ENCODE measurements at regions of chr12 and their contacts with region 1.

Region 1: DNA sequence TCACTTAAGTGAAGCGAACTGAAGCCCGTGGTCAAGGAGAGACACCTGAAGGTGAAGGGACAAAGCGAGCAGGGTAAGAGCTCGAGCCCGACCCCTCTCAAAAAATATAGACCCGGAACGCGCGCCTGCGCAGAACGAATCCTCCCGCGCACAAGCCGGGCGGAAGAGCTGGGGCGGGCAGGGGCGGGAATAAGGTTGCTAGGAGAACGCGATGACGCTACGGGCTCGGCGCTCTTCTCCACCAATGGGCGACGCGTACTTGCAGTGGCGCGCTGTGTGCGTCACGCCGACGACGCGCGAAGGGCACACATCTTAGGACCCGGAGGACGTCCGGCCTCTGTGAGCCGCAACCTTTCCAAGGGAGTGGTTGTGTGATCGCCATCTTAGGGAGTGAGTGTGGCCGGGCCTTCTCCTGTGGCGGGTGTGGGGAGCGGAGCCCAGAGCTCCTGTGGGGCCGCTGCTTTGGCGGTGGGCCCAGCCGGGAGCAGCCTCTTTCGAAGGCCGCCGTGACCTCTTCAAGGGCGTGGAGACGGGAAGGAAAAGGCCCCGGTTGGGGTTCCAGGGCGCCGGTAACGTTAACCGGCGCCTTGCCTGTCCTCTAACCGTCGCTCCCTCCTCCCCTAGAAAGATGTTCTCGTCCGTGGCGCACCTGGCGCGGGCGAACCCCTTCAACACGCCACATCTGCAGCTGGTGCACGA is at the start of gene SLC25A3:
- DNase-seq: peak; percentile 98 to 99 (median 99)
- ATAC-seq: peak; percentile 99 to 100
- H3K4me3 ChIP-seq: peak within 1 kb of the TSS; percentile 82
- H3K27ac ChIP-seq: peak within 1 kb of the TSS; percentile 98
- H3K4me1 ChIP-seq: no peaks in the 10 kb centered on the region
- H3K27me3 ChIP-seq: no peaks in the 10 kb centered on the region
- total RNA-seq, gene SLC25A3: 961 to 1,212 (median 1,085) TPM

Region 2: DNA sequence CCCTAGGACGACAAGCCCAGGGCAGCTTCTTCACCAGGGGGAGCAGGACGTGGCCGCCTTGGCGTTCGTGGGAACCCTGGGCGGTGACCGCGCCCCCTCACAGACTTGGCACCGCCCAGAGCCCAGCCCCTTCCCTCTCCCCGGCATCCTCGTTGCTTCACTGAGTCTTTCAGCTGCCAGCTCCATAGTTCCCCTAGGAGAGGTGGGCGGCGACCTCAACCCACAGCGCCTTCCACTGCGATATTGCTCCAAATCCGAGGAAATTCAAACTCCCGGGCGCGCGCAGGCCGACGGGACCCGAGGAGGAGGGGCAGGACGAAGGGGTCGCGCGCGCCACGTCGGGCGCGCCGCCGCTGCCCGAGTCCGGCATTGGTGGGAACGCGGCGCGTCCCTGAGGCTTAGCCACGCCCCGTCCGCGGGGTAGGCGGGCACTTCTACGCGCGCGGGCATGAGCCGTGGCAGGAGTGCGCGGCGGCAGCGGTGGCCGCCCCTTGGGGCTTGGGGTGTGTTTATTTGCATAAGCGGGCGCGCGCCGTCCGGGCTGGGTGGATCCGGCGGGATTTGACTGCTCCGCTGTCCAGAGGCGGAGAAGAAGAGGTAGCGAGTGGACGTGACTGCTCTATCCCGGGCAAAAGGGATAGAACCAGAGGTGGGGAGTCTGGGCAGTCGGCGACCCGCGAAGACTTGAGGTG is 51.4 kb after region 1 on chr12 and contains the starts of genes APAF1 and IKBIP:
- intact Hi-C with region 1: loop called in 2 of 4 experiments (anchors 10 kb)
- DNase-seq: peak; percentile 99 to 100 (median 99)
- ATAC-seq: peak; percentile 99
- H3K4me3 ChIP-seq: peak within 1 kb of the TSS; percentile 93
- H3K27ac ChIP-seq: peak within 1 kb of the TSS; percentile 53
- H3K4me1 ChIP-seq: no peaks in the 10 kb centered on the region
- H3K27me3 ChIP-seq: no peaks in the 10 kb centered on the region
- total RNA-seq, gene APAF1: 4.0 to 7.1 (median 4.5) TPM
- total RNA-seq, gene IKBIP: 4.9 to 10.3 (median 6.3) TPM

Region 3: DNA sequence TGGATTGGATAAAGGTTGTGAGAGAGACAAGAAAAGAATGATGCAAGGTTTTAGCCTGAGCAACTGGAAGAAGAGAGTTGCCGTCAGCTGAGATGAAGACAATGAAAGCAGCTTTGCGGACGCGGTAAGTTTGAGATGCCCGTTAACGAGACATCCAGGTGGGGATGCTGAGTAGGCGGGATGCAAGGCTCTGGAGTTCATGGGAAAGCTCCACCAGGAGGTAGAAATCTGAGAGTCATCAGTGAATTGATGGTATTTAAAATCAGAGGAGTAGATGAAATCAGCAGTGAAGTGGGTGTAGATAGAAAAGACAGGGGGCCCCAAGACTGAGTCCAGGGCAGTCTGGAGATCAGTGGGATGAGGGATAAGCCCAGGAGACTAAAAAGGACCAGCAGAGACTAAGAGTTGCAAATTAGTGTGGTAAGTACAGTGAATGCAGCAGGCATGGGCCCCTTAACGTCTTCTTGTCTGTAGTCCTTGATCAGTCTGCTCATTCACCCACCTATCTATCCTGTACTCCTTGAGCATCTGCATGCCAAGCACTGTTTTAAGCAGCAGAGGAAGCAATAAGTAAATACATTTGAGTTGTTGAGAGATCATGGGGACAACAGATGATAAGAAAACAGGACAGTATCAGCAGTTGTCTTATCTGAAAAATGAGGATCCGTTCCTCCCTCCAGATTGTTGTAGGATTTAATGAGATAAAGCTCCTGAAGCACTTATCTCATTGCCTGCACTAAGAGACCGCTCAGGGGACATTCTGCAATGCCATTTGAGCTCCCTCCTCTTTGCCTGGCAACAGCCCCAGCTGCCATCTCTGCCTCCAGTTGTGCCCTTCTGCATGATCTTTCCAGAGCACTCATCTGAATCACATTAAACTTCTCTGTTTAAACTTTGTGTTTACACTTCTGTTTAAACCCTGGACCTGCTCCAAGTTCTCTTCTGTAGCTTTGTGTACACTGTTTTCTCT is 143.1 kb after region 1 on chr12:
- intact Hi-C with region 1: no loop called
- DNase-seq: no peak
- ATAC-seq: no peak
- H3K4me3 ChIP-seq: no peak overlapping the region
- H3K27ac ChIP-seq: no peak overlapping the region
- H3K4me1 ChIP-seq: no peaks in the 10 kb centered on the region
- H3K27me3 ChIP-seq: no peaks in the 10 kb centered on the region

Measured in right cardiac atrium (tissue), 5 donors.